Activated T-helper 1 cell treated with anti-CD3 and anti-CD28 coated beads, Interleukin-12 subunit alpha, Interleukin-12 subunit beta, Interleukin-2, Interleukin-4 antibody, amounts not matched to agents 30 ng/mL and 10 ng/mL and 1 ng/mL, durations not matched to agents 14 hours and 24 hours and 36 hours (primary cell): ENCODE measurements at regions of chr21 and their contacts with region 1.

Region 1: GRCh38 chr21:41926117-41926806 is 27.6 kb downstream of the C2CD2 start:
- DNase-seq: peak; percentile 35
- H3K4me3 Mint-ChIP-seq: peak overlapping the region; percentile 84
- H3K27ac Mint-ChIP-seq: peak overlapping the region; percentile 92
- H3K4me1 Mint-ChIP-seq: peaks cover 69% of the 10 kb centered on the region
- H3K27me3 Mint-ChIP-seq: peaks cover 6% of the 10 kb centered on the region

Region 2: GRCh38 chr21:41899426-41900202 is 26.6 kb before region 1 on chr21:
- intact Hi-C with region 1: loop called (anchors 1 kb)
- DNase-seq: no peak
- H3K4me3 Mint-ChIP-seq: peak overlapping the region; percentile 51
- H3K27ac Mint-ChIP-seq: peak overlapping the region; percentile 83
- H3K4me1 Mint-ChIP-seq: peaks cover 34% of the 10 kb centered on the region
- H3K27me3 Mint-ChIP-seq: no peaks in the 10 kb centered on the region

Region 3: GRCh38 chr21:41953831-41954653 is 27.8 kb after region 1 on chr21 and contains the start of gene C2CD2:
- intact Hi-C with region 1: loop called (anchors 2 kb)
- DNase-seq: no peak
- H3K4me3 Mint-ChIP-seq: peak within 1 kb of the TSS; percentile 60
- H3K27ac Mint-ChIP-seq: peak within 1 kb of the TSS; percentile 38
- H3K4me1 Mint-ChIP-seq: peaks cover 6% of the 10 kb centered on the region
- H3K27me3 Mint-ChIP-seq: peaks cover 19% of the 10 kb centered on the region
- total RNA-seq, gene C2CD2: 9.5 and 10.2 TPM in 2 replicates

Region 4: DNA sequence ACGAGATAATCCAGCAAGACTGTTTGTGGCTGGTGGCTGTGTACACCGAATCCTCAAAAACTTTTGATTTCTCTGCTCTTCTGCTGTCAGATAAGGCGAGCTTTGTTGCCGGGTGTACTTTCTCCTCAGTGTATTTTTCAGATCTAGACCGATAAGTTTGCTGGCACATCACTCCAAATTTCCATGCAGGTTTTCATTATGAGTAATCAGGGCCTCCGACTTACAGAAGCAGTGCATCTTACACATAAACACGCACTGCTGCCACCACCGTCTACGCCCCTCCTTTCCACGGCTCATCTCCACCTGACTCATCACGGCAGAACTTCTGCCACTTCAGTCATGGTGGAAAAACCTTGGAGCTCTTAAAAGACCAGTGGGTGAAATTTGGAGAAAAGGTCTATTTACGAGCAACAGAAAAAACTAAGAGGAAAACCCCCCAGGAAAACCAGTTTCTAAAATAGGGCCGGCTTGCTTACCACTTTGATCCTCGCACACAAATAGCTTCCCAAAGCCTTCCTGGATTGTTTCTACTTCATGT is 76.2 kb after region 1 on chr21:
- intact Hi-C with region 1: loop called (anchors 2 kb)
- DNase-seq: peak; percentile 78
- H3K4me3 Mint-ChIP-seq: peak overlapping the region; percentile 34
- H3K27ac Mint-ChIP-seq: peak overlapping the region; percentile 85
- H3K4me1 Mint-ChIP-seq: peaks cover 58% of the 10 kb centered on the region
- H3K27me3 Mint-ChIP-seq: no peaks in the 10 kb centered on the region